ENCODE measurements at regions of chr7 and their contacts with region 1.

Region 1: GRCh38 chr7:12686894-12687717 is at the start of gene ARL4A:
- DNase-seq: peak; percentile 96
- ATAC-seq: peak; percentile 88
- H3K4me3 ChIP-seq: peak within 1 kb of the TSS; percentile 82
- H3K27ac ChIP-seq: peak within 1 kb of the TSS; percentile 94
- H3K4me1 ChIP-seq: peaks cover 6 to 16% of the 10 kb centered on the region in 2 experiments; a peak in 3 of 4 replicates
- H3K27me3 ChIP-seq: no peaks in the 10 kb centered on the region
- CTCF ChIP-seq: peak in 2 of 3 experiments; percentile 8 to 71; a peak in 3 of 6 replicates
- POLR2A ChIP-seq: peak; percentile 96
- RAD21 ChIP-seq: peak; percentile 94
- total RNA-seq, gene ARL4A: 44.6 TPM

Region 2: DNA sequence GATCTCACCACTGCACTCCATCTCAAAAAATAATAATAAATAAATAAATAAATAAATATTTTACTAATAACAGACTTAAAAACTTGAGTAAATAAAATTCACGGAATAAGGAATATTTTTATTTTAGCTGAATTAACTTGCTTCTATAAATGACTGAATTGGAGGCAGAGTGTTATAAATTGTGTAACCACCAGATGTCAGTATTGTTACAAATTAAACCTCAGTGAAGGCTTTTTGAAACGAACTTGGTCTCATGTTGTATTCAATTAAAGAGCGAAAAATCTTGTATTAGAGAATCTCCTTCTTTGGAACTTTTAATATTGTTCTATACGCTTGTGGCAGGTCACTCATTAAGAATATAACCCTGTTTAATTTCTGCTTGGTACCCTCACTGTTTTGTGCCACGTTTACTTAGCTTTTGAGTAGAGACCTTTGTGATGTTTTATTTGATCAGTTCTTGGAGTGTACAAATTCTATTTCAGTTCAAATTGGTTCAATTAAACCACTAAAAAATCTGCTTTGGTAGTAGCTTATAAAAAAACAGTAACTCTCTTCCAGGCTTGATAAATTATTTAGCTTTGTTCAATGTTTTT is 162.2 kb before region 1 on chr7:
- CTCF ChIA-PET with region 1: interaction called, 16 read pairs
- POLR2A ChIA-PET with region 1: no interaction called
- RAD21 ChIA-PET with region 1: no interaction called
- intact Hi-C with region 1: loop called (anchors 5 kb)
- DNase-seq: peak; percentile 60
- ATAC-seq: peak; percentile 61
- H3K4me3 ChIP-seq: no peak overlapping the region
- H3K27ac ChIP-seq: no peak overlapping the region
- H3K4me1 ChIP-seq: peaks cover 0 to 4% of the 10 kb centered on the region in 2 experiments; a peak in 1 of 4 replicates
- H3K27me3 ChIP-seq: no peaks in the 10 kb centered on the region
- CTCF ChIP-seq: peak; percentile 38 to 73 (median 63); a peak in 5 of 6 replicates
- POLR2A ChIP-seq: no peak
- RAD21 ChIP-seq: peak; percentile 81

Region 3: DNA sequence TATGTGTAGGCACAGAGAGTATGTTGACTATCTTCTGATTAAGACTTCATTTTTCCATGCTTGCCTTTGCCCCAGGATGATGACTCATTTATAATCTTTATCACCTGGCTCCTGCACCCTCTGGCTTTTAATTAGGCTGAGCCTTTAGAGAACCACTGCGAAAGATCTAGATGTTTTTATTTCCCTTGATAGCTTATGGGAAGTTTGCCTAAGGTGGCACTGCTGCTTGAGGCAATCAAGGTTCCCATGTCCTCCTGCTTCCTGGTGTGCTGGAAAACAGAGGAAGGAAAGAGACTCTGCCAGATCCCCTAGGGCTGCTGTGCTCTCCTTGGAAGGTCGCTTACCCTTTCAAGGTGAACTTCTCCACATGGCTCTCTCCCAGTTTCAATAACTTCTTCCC is 115.0 kb after region 1 on chr7:
- CTCF ChIA-PET with region 1: no interaction called
- POLR2A ChIA-PET with region 1: no interaction called
- RAD21 ChIA-PET with region 1: no interaction called
- intact Hi-C with region 1: loop called (anchors 5 kb)
- DNase-seq: peak; percentile 42
- ATAC-seq: peak; percentile 57; the same call in 1 of the 2 replicates
- H3K4me3 ChIP-seq: peak overlapping the region in 1 of 2 experiments; percentile 42; a peak in 2 of 4 replicates
- H3K27ac ChIP-seq: peak overlapping the region; percentile 54
- H3K4me1 ChIP-seq: peaks cover 35 to 38% of the 10 kb centered on the region in 2 experiments
- H3K27me3 ChIP-seq: no peaks in the 10 kb centered on the region
- CTCF ChIP-seq: no peak
- POLR2A ChIP-seq: no peak
- RAD21 ChIP-seq: peak; percentile 25

Region 4: DNA sequence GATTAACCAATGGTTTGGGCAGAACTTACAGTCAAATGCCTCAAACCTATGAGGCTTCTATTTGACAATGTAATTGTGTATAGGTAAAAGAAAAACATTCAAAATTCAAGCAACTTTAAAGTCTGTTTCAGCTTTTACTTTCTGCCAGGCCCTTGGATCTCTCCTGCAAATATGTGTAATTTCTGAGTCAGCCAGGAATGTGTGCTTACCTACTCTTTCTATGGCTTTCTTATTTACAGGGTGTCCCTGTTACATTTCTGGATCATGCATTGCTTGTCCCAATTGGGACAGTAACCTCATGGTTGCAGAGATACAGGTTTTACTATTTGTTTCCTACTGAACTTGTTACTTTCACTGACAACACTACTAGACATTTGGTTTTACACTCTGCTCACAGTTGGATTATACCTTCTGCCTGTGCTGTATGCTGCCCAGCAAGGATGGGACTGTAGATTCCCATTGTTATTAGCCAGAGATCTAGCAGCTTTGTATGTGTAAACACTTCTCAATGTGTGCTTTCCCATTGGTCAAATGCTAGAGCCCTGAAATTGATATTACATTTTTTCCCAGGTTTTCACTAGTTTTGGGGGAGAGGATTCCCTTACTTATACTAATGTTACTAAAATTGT is 355.6 kb after region 1 on chr7:
- CTCF ChIA-PET with region 1: no interaction called
- POLR2A ChIA-PET with region 1: interaction called, 8 read pairs
- RAD21 ChIA-PET with region 1: no interaction called
- intact Hi-C with region 1: loop called (anchors 2 kb)
- DNase-seq: peak; percentile 56
- ATAC-seq: peak; percentile 54
- H3K4me3 ChIP-seq: peak overlapping the region in 1 of 2 experiments; percentile 51; a peak in 2 of 4 replicates
- H3K27ac ChIP-seq: peak overlapping the region; percentile 68; the same call in 1 of the 2 replicates
- H3K4me1 ChIP-seq: peaks cover 28 to 66% of the 10 kb centered on the region in 2 experiments
- H3K27me3 ChIP-seq: no peaks in the 10 kb centered on the region
- CTCF ChIP-seq: no peak
- POLR2A ChIP-seq: no peak
- RAD21 ChIP-seq: 0 out of 2 replicates have a peak, but pooled peaks have one; percentile 2

Region 5: DNA sequence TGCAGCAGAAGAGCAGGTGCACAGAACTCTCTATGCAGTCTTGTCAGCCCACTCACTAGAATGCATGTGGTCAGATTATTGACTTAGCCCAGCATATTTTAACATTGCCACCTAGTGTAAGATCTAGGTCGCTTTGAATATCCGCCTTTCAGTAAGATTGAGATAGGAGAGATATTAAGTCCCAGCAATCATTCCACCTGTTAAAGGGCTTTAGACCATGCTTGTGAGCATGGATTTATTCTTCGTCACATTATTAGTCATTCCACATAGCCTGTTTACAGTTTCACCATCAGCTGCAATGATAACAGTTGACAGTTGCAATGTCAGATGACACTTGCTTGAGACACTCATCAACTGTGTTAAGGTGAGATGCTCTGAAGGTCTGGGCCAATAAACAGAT is 492.0 kb after region 1 on chr7:
- CTCF ChIA-PET with region 1: interaction called, 3 read pairs
- POLR2A ChIA-PET with region 1: no interaction called
- RAD21 ChIA-PET with region 1: no interaction called
- intact Hi-C with region 1: loop called (anchors 5 kb)
- DNase-seq: no peak
- ATAC-seq: peak; percentile 55; the same call in 1 of the 2 replicates
- H3K4me3 ChIP-seq: no peak overlapping the region
- H3K27ac ChIP-seq: no peak overlapping the region
- H3K4me1 ChIP-seq: no peaks in the 10 kb centered on the region
- H3K27me3 ChIP-seq: no peaks in the 10 kb centered on the region
- CTCF ChIP-seq: peak; percentile 31 to 37 (median 36); a peak in 3 of 6 replicates
- POLR2A ChIP-seq: no peak
- RAD21 ChIP-seq: peak; percentile 67

Measured in HCT116 (cell line).